BJ (cell line): ENCODE measurements at regions of chr13 and their contacts with region 1.

Region 1: DNA sequence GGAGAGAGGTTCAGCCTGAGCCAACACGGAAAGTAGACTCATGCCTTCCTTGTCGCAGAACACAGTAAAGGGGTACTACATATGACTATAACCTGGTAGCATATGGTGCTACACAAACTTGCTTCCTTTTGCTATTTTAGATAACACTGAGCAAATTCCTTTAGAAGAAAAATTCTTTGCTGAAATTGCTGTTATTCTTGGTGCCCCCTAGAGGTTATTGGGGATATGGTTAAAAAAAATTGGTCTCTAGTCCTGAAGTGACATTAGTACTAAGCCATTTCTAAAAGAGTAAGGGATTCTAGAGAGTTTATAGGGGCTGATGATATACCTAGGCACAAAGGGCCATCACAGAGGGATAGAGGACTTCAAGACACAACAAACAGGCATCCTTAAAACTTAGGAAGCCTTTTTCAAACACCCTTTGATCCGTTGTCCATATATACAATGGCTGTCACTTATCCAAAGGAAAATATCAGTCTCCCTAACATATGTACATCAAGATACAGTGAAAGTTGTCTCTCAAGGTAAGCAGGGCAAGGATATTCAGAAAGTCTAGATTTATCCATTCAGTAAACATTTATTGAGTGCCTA is 13.9 kb upstream of the HS6ST3 start:
- DNase-seq: no peak
- H3K4me3 ChIP-seq: no peak overlapping the region
- H3K27me3 ChIP-seq: no peaks in the 10 kb centered on the region
- CTCF ChIP-seq: peak; percentile 66

Region 2: DNA sequence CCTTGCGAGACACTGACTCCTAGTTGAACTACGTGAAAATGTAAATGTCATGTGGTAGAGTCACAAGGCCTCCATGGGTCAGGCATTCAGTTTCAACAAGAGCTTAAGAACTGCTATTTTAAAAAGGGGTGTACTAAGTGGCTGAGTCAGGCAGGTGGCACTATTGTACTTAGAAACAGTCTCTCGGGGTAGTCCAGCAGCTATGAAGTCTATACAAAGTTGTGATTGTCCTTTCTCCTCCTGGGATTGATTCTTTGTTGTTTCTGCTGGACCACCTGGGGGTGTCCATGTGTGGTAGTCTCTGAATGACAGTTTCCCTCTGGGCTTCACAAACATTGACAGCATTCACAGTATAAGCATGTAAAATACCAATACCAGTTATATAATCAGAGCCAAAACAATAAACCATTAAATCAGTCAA is 55.9 kb before region 1 on chr13:
- CTCF ChIA-PET with region 1: interaction called, 12 read pairs
- POLR2A ChIA-PET with region 1: no interaction called
- DNase-seq: no peak
- H3K4me3 ChIP-seq: no peak overlapping the region
- H3K27me3 ChIP-seq: no peaks in the 10 kb centered on the region
- CTCF ChIP-seq: peak; percentile 60

Region 3: DNA sequence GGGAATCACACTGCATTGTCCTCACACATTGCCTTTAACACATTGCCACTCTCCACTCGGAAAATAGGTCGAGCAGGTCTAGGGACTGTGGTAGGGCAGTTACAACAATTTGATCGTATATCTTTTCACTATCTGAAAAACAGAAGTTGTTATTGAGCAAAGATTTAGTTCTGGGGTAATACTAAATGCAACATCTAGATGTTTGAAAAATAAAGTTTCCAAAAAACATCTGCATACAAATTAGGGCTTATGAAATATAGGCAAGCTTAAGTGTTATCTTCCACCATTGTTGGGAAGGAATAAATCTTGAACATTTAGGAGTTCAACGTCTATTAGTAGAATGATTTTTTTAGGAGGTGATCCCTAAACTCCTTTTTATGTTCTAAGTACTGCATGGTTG is 13.1 kb after region 1 on chr13:
- CTCF ChIA-PET with region 1: interaction called, 16 read pairs
- POLR2A ChIA-PET with region 1: no interaction called
- DNase-seq: no peak
- H3K4me3 ChIP-seq: no peak overlapping the region
- H3K27me3 ChIP-seq: peaks cover 26% of the 10 kb centered on the region
- CTCF ChIP-seq: no peak